ENCODE measurements at regions of chr14 and their contacts with region 1.

Region 1: GRCh38 chr14:44576356-44576755 is 69.3 kb upstream of the FSCB start:
- DNase-seq: no peak
- ATAC-seq: no peak
- H3K4me3 ChIP-seq: no peak overlapping the region
- H3K4me3 Mint-ChIP-seq: no peak overlapping the region
- H3K27ac ChIP-seq: no peak overlapping the region
- H3K27ac Mint-ChIP-seq: no peak overlapping the region
- H3K4me1 ChIP-seq: no peaks in the 10 kb centered on the region
- H3K4me1 Mint-ChIP-seq: no peaks in the 10 kb centered on the region
- H3K27me3 ChIP-seq: no peaks in the 10 kb centered on the region
- H3K27me3 Mint-ChIP-seq: no peaks in the 10 kb centered on the region
- CTCF ChIP-seq: no peak

Region 2: DNA sequence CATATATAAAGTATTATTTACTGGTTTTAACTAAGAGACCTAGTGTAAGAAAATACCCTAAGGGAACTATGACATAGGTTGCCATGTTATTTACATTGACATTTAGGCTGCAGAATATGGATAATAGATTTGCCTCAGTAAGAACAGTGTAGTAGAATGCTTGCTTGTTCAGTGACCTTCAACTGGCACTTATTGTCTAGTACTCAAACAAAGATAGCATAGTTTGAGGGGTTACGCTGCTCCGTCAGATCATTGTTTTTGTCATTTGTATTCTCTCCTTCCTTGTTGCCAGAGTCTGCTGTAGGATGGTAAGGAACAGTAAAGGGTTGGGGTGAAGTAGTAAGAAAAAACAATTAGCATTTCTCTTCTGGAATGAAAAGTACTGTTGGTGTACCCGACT is 418.8 kb after region 1 on chr14:
- CTCF ChIA-PET with region 1: no interaction called
- POLR2A ChIA-PET with region 1: no interaction called
- intact Hi-C with region 1: loop called in 1 of 2 experiments (anchors 5 kb)
- DNase-seq: no peak
- ATAC-seq: no peak
- H3K4me3 ChIP-seq: no peak overlapping the region
- H3K4me3 Mint-ChIP-seq: no peak overlapping the region
- H3K27ac ChIP-seq: no peak overlapping the region
- H3K27ac Mint-ChIP-seq: no peak overlapping the region
- H3K4me1 ChIP-seq: no peaks in the 10 kb centered on the region
- H3K4me1 Mint-ChIP-seq: peaks cover 8% of the 10 kb centered on the region
- H3K27me3 ChIP-seq: no peaks in the 10 kb centered on the region
- H3K27me3 Mint-ChIP-seq: no peaks in the 10 kb centered on the region
- CTCF ChIP-seq: no peak

Measured in CD8-positive, alpha-beta T cell (primary cell).